Activated T-helper 1 cell treated with anti-CD3 and anti-CD28 coated beads, Interleukin-12 subunit alpha, Interleukin-12 subunit beta, Interleukin-2, Interleukin-4 antibody, amounts not matched to agents 30 ng/mL and 10 ng/mL and 1 ng/mL, durations not matched to agents 14 hours and 24 hours and 36 hours (primary cell): ENCODE measurements at regions of chr22 and their contacts with region 1.

Region 1: DNA sequence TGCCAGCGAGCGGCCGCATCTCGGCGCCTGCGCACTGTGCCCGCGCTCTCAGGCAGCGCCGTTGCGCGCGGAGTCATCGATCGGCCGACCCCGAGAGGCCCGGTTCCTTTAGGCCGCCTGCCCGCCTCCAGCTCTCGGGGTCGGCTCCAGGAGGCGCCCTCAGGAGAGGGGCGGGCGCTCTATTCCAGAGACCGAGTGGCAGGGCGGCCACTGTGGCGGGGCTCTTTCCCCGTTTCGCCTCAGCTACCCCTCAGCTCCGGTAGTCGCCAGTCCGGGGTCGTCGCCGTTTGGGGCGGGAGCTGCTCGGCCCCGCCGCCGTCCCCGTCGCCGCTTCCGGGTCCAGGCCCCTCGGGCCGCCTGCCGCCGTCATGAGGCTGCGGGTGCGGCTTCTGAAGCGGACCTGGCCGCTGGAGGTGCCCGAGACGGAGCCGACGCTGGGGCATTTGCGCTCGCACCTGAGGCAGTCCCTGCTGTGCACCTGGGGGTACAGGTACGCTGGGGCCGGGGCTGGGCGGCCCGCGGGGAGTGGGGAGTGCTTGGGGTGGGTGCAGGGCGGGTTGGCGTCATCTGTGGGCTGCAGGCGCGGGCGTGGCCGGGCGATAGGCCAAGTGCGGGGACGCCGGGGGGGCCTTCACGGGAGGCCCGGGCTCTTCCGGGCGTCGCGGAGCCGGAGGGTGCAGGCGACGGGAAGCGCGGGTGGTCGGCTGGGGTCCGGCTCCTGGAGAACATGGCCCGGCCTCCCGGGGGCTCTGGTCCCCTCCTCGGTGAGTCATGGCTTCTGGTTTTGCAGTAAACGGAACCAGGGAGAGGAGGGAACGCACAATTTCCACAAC is at the start of gene FBXO7:
- DNase-seq: peak; percentile 82
- H3K4me3 Mint-ChIP-seq: peak within 1 kb of the TSS; percentile 93
- H3K27ac Mint-ChIP-seq: peak within 1 kb of the TSS; percentile 93
- H3K4me1 Mint-ChIP-seq: peaks cover 33% of the 10 kb centered on the region
- H3K27me3 Mint-ChIP-seq: peaks cover 7% of the 10 kb centered on the region
- total RNA-seq, gene FBXO7: 92.3 and 97.8 TPM in 2 replicates

Region 2: GRCh38 chr22:31977141-31977841 is 497.6 kb before region 1 on chr22:
- intact Hi-C with region 1: loop called (anchors 1 kb)
- DNase-seq: peak; percentile 60
- H3K4me3 Mint-ChIP-seq: no peak overlapping the region
- H3K27ac Mint-ChIP-seq: no peak overlapping the region
- H3K4me1 Mint-ChIP-seq: no peaks in the 10 kb centered on the region
- H3K27me3 Mint-ChIP-seq: peaks cover 10% of the 10 kb centered on the region

Region 3: DNA sequence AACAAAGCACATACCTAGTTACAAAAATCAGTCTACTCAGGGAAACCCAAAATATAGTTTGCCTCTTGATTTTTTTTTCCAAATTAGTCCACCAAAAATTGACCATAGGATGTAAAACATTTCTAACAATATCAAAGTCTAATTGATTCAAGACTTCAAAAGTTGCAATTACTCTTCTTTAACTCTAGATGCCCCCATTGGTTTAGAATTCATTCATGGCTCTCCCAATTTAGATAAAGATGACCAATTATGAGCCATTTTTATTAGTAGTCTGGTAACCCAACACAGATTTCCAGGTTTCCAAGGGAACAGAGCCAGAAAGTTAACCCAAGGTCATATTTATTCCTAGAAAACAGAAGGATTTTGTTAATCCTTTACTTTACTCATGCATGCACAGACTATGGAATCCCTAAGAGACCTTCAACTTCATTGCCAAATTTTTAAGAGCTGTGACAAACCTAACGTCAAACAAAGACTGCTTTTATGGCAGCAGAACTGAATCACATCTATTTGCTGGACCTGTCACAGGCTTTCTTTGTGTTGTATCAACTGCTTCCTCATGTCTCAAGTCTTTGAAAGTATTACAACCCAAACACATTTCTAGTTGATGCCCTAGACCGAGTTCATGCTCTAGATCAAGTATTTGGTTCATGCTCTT is 371.1 kb before region 1 on chr22:
- intact Hi-C with region 1: loop called (anchors 1 kb)
- DNase-seq: no peak
- H3K4me3 Mint-ChIP-seq: no peak overlapping the region
- H3K27ac Mint-ChIP-seq: no peak overlapping the region
- H3K4me1 Mint-ChIP-seq: no peaks in the 10 kb centered on the region
- H3K27me3 Mint-ChIP-seq: peaks cover 22% of the 10 kb centered on the region

Region 4: GRCh38 chr22:32202539-32203180 is 272.2 kb before region 1 on chr22:
- intact Hi-C with region 1: loop called (anchors 10 kb)
- DNase-seq: no peak
- H3K4me3 Mint-ChIP-seq: peak overlapping the region; percentile 68
- H3K27ac Mint-ChIP-seq: no peak overlapping the region
- H3K4me1 Mint-ChIP-seq: peaks cover 34% of the 10 kb centered on the region
- H3K27me3 Mint-ChIP-seq: peaks cover 17% of the 10 kb centered on the region

Region 5: GRCh38 chr22:32222991-32223390 is 251.9 kb before region 1 on chr22:
- intact Hi-C with region 1: no loop called
- DNase-seq: no peak
- H3K4me3 Mint-ChIP-seq: no peak overlapping the region
- H3K27ac Mint-ChIP-seq: no peak overlapping the region
- H3K4me1 Mint-ChIP-seq: no peaks in the 10 kb centered on the region
- H3K27me3 Mint-ChIP-seq: peaks cover 19% of the 10 kb centered on the region

Region 6: GRCh38 chr22:32265882-32266767 is 208.7 kb before region 1 on chr22:
- intact Hi-C with region 1: loop called (anchors 1 kb)
- DNase-seq: peak; percentile 33
- H3K4me3 Mint-ChIP-seq: no peak overlapping the region
- H3K27ac Mint-ChIP-seq: no peak overlapping the region
- H3K4me1 Mint-ChIP-seq: peaks cover 10% of the 10 kb centered on the region
- H3K27me3 Mint-ChIP-seq: peaks cover 2% of the 10 kb centered on the region

Region 7: GRCh38 chr22:32389685-32390084 is 85.2 kb before region 1 on chr22:
- intact Hi-C with region 1: no loop called
- DNase-seq: no peak
- H3K4me3 Mint-ChIP-seq: no peak overlapping the region
- H3K27ac Mint-ChIP-seq: no peak overlapping the region
- H3K4me1 Mint-ChIP-seq: peaks cover 4% of the 10 kb centered on the region
- H3K27me3 Mint-ChIP-seq: no peaks in the 10 kb centered on the region

Region 8: GRCh38 chr22:32411829-32412592 is 62.8 kb before region 1 on chr22 and contains the start of gene RTCB:
- intact Hi-C with region 1: loop called (anchors 1 kb)
- DNase-seq: peak; percentile 91
- H3K4me3 Mint-ChIP-seq: peak within 1 kb of the TSS; percentile 94
- H3K27ac Mint-ChIP-seq: peak within 1 kb of the TSS; percentile 93
- H3K4me1 Mint-ChIP-seq: peaks cover 49% of the 10 kb centered on the region
- H3K27me3 Mint-ChIP-seq: no peaks in the 10 kb centered on the region
- total RNA-seq, gene RTCB: 103 and 105 TPM in 2 replicates